Thyroid gland (tissue), 4 donors: ENCODE measurements at regions of chr5 and their contacts with region 1.

Region 1: DNA sequence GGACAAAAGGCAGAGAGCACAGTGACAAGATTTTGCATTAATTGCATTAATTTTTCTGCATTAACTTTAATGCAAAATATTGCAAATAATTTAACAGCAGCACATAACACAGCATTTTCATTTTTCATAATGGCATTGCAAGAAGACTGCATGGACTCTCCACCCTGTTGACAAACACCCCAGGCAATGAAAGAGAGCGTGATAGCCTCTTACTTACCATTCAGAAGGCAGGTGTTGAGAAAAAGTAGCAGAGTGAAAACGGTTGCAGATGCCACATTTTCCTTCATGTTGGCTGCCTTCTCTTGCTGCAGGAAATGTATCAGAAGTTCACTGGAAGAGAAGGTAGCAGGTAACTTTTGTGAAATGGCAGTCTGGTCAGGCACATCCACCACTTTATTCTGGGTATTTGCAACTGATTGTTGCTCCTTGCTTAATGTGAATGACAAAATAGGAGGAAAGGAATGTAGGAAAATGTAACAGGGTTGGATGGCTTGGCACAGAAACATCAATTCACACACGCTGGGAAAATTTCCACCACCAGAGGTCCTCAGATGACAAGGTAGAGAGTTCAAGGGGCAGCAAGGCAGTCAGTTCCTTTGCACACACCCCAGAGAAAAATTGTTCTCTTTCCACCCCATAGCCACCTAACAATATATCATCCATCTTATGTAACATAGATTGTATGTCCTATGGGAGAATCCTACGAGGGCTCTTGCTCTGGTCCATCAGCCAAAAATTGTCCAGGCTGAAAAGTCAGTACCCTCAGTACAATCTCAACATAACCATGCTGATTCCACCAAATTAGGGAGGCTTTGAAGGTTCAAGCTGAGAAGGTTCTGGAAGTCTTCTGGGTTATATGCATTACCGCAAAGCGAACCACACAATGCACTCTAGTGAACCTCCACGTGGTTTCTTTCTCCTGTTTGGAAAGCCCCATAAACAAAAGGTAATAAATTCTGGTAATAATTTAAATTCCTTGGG is 41.9 kb upstream of the AGXT2 start:
- DNase-seq: peak; percentile 64 to 70
- H3K4me3 ChIP-seq: no peak overlapping the region
- H3K27ac ChIP-seq: no peak overlapping the region
- H3K4me1 ChIP-seq: no peaks in the 10 kb centered on the region
- H3K27me3 ChIP-seq: no peaks in the 10 kb centered on the region
- CTCF ChIP-seq: peak; percentile 43 to 90 (median 70)
- POLR2A ChIP-seq: no peak

Region 2: GRCh38 chr5:34915139-34915855 is 174.3 kb before region 1 on chr5 and contains the starts of genes BRIX1 and RAD1:
- intact Hi-C with region 1: no loop called
- DNase-seq: peak; percentile 96 to 98
- H3K4me3 ChIP-seq: peak within 1 kb of the TSS; percentile 70 to 92 (median 72)
- H3K27ac ChIP-seq: peak within 1 kb of the TSS; percentile 38 to 80 (median 80)
- H3K4me1 ChIP-seq: peaks cover 21 to 27% of the 10 kb centered on the region in 2 donors
- H3K27me3 ChIP-seq: no peaks in the 10 kb centered on the region
- CTCF ChIP-seq: peak in 2 of 6 experiments; percentile 22 to 45
- POLR2A ChIP-seq: peak in 1 of 2 donors; percentile 63
- total RNA-seq, gene BRIX1: 16.2 to 24.5 (median 20.8) TPM
- total RNA-seq, gene RAD1: 31.1 to 40.7 (median 37.5) TPM

Region 3: DNA sequence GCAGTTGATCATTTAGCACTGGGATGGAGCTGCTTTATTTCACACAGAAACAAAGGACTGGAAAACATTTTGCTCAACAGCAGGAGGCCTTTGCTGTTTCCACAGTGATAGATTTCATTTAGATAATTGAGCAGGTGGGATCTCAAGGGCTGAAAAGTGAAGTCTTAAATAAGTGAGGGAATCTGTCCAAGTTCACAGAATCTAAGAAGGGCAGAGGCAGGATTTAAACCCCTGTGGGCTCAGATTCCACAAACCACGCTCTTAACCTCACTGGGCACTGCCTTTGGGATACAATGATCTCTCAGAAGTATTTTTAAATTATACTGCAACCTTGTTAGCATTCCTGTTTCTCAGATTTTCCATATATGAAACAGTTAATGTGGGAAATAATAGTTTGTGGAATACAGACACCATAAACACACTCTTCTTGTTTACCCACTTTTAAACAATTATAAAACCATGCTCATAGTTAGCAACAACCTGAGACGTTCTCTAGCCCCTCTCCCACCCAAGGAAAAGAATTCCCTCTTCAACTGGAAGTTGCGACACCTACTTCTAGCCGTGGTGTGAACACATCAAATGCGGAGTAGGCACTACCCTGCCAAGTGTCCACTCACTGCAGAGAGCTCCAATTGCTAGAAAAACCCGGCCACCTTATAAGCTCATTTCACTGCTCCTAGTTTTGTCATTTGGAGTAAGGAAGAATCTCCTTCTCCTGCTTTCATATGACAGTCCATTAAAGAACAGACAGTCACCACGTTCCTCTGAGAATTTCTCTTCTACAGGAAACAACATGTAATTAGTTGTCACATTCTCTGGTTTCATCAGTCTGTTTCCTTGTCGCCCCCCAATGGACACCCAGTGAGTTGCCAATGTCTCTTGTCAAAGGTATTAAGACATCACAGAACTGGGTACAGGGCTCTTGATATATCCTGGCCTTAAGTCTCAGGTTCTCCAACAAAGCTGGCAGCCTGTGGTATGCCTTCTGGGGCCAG is 93.2 kb after region 1 on chr5:
- intact Hi-C with region 1: loop called (anchors 5 kb)
- DNase-seq: peak; percentile 73 to 80
- H3K4me3 ChIP-seq: no peak overlapping the region
- H3K27ac ChIP-seq: no peak overlapping the region
- H3K4me1 ChIP-seq: peaks cover 0 to 6% of the 10 kb centered on the region in 2 donors
- H3K27me3 ChIP-seq: no peaks in the 10 kb centered on the region
- CTCF ChIP-seq: peak in 4 of 6 experiments; percentile 49 to 93 (median 71)
- POLR2A ChIP-seq: no peak

Region 4: DNA sequence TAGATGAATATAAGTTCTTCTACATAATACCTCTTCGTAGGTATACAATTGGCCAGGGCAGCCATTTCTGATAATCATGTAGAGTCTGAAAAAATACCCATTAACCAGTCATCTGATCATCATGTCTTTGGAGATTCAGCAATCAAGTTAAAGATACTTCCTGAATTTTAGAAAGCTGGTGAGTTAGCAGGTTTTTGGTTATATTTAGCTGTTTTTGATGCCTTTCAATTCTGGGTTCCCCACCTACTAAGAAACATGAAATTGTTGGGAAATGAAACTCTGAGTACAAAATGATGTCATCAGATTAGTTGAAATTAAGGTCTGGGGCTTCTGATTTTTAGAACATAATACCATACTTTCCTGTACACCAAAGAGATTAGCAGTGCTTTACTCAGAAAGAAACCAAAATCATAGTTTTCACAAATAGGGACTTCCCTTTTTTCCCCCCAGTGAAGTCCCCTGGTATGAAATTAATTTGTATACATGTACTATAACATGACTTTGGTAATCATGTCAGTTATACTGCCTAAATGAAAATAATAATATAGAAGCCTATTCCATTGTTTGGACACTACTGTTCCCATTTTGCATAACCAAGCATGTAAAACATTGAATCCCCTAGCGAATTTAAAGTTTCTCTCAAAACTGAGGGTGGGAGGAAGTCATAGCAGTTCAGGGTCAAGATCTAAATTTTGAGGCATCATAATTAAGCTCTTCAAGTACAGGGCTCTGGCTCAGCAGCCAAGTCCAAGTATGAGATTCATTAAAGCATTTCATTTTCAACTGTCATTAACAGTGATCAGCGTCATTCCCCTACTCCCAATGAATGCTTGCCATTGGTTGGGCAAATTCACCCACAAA is 122.7 kb after region 1 on chr5:
- intact Hi-C with region 1: no loop called
- DNase-seq: no peak
- H3K4me3 ChIP-seq: no peak overlapping the region
- H3K27ac ChIP-seq: no peak overlapping the region
- H3K4me1 ChIP-seq: no peaks in the 10 kb centered on the region
- H3K27me3 ChIP-seq: no peaks in the 10 kb centered on the region
- CTCF ChIP-seq: no peak
- POLR2A ChIP-seq: no peak